GM13977 (cell line): ENCODE measurements at regions of chr16 and their contacts with region 1.

Region 1: DNA sequence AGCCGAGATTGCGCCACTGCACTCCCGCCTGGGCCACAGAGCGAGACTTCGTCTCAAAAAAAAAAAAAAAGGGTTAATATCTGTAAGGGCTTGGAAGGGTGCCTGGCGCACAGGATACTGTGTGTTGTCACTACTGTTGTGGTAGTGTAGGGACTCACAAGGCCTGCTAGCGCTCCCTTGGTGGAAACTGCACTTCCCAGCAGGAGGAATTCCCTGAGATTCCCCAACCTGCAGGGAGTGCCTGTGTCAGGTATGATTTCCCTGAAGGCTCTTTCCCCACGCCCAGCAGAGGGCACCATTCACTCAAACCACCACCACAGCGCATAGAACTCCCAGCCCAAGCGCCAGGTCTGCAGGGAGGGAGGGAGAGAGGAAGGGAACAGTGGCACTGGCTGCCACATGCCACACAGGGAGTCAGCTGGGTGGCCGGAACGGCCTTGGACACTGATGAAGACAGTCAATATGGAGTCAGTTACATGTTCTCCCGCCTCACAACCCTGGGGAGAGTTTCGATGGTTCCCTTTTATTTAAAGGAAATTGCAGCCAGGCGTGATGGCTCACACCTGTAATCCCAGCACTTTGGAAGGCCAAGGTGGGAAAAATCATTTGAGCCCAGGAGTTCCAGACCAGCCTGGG is 32.7 kb upstream of the CDH1 start:
- DNase-seq: peak; percentile 78
- CTCF ChIP-seq: peak; percentile 86

Region 2: GRCh38 chr16:68800257-68800875 is 96.0 kb after region 1 on chr16:
- in situ Hi-C with region 1: loop called (anchors 10 kb)
- DNase-seq: peak; percentile 67
- CTCF ChIP-seq: peak; percentile 68